ENCODE measurements at regions of chr21 and their contacts with region 1.

Region 1: GRCh38 chr21:42009831-42010523 is at the start of gene ZBTB21:
- DNase-seq: peak; percentile 98
- H3K4me3 ChIP-seq: peak within 1 kb of the TSS; percentile 79
- H3K27ac ChIP-seq: peak within 1 kb of the TSS; percentile 65
- H3K4me1 ChIP-seq: peaks cover 38% of the 10 kb centered on the region
- CTCF ChIP-seq: no peak
- total RNA-seq, gene ZBTB21: 10.0 and 12.4 TPM in 2 replicates

Region 2: GRCh38 chr21:41816220-41817165 is 193.5 kb before region 1 on chr21:
- CTCF ChIA-PET with region 1: no interaction called
- POLR2A ChIA-PET with region 1: interaction called, 3 read pairs
- intact Hi-C with region 1: loop called (anchors 2 kb)
- DNase-seq: peak; percentile 82
- H3K4me3 ChIP-seq: no peak overlapping the region
- H3K27ac ChIP-seq: peak overlapping the region; percentile 38
- H3K4me1 ChIP-seq: peaks cover 11% of the 10 kb centered on the region
- CTCF ChIP-seq: peak; percentile 86

Region 3: GRCh38 chr21:41926117-41926806 is 83.7 kb before region 1 on chr21:
- CTCF ChIA-PET with region 1: no interaction called
- POLR2A ChIA-PET with region 1: interaction called, 3 read pairs
- intact Hi-C with region 1: loop called (anchors 5 kb)
- DNase-seq: peak; percentile 82
- H3K4me3 ChIP-seq: peak overlapping the region; percentile 70
- H3K27ac ChIP-seq: peak overlapping the region; percentile 83
- H3K4me1 ChIP-seq: peaks cover 95% of the 10 kb centered on the region
- CTCF ChIP-seq: no peak

Region 4: GRCh38 chr21:41953831-41954653 is 55.9 kb before region 1 on chr21 and contains the start of gene C2CD2:
- CTCF ChIA-PET with region 1: no interaction called
- POLR2A ChIA-PET with region 1: no interaction called
- intact Hi-C with region 1: no loop called
- DNase-seq: no peak
- H3K4me3 ChIP-seq: no peak within 1 kb of the TSS
- H3K27ac ChIP-seq: no peak within 1 kb of the TSS
- H3K4me1 ChIP-seq: peaks cover 17% of the 10 kb centered on the region
- CTCF ChIP-seq: no peak
- total RNA-seq, gene C2CD2: 3.4 and 4.5 TPM in 2 replicates

Region 5: GRCh38 chr21:42031816-42032215 is 21.8 kb after region 1 on chr21:
- CTCF ChIA-PET with region 1: no interaction called
- POLR2A ChIA-PET with region 1: interaction called, 4 read pairs
- intact Hi-C with region 1: loop called (anchors 1 kb)
- DNase-seq: peak; percentile 65
- H3K4me3 ChIP-seq: peak overlapping the region; percentile 7
- H3K27ac ChIP-seq: peak overlapping the region; percentile 42
- H3K4me1 ChIP-seq: peaks cover 60% of the 10 kb centered on the region
- CTCF ChIP-seq: no peak

Region 6: DNA sequence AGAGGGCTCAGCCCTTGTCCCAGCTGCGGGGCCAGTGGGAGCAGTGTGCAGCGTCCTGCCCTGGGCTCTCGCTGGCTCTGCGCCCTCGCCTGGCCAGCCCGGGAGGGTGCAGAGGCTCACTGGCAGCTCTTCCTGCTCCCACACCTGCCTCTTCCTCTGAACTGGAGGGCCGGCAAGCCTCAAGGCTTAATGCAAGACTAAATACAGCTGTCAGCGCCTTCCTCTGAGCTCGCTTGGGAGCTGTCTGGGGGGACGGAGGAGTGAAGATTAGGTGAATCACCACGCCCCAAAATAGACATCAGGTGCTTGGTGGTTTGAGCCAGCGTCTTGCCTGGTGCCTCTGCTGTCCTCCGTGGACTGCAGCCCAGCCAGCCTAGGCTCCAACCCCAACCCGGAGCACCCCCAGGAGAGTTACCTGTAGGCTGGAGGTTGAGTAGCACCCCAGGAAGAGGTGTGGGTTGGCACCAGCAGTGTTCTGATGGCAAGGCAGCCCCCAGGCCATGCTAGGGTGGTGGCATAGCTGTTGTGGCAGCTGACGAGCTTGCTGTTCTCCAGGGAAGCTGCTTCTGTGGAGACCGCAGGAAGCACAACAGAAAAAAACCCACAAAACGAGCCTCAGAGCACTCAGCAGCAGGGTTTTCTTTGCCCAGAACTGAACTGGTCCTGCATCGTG is 98.0 kb after region 1 on chr21:
- CTCF ChIA-PET with region 1: interaction called, 11 read pairs
- POLR2A ChIA-PET with region 1: interaction called, 5 read pairs
- intact Hi-C with region 1: loop called (anchors 1 kb)
- DNase-seq: peak; percentile 98
- H3K4me3 ChIP-seq: peak overlapping the region; percentile 55
- H3K27ac ChIP-seq: peak overlapping the region; percentile 89
- H3K4me1 ChIP-seq: peaks cover 38% of the 10 kb centered on the region
- CTCF ChIP-seq: peak; percentile 89

Region 7: DNA sequence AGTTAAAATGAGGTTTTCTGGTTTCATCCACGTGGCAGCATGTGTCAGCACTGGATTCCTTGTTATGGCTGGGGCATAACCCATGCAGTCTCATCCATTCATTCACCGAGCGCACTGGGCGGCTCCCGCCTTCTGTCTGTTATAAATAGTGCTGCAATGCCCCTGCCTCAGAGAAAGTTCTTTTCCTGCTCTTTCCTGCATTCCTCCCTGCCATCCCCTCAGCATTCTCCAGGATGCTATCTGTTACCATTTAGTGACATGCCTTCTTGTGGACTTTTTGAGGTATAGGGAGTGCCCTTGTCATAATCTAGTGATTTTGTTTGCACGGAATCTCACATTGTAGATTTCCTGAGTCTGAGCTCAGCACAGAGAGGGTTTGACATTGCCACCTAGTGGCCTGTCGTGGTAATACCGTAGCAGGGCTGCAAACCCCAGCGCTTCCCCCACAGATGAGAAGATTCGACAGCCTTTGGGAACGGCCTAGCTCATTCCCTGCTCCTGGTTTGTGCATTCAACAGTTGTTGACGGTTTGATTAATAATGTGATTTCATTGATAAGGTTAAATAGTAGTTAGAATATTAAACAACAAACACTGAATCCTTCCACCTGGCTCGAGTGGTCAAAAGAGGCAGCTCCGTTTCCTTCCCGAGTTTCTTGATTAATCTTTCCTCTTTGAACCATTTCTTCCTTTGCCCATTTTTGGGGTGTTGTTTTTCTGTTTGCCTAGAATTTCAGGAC is 107.4 kb after region 1 on chr21:
- CTCF ChIA-PET with region 1: interaction called, 4 read pairs
- POLR2A ChIA-PET with region 1: interaction called, 6 read pairs
- intact Hi-C with region 1: loop called (anchors 1 kb)
- DNase-seq: peak; percentile 84
- H3K4me3 ChIP-seq: peak overlapping the region; percentile 10
- H3K27ac ChIP-seq: peak overlapping the region; percentile 93
- H3K4me1 ChIP-seq: peaks cover 70% of the 10 kb centered on the region
- CTCF ChIP-seq: peak; percentile 99

Region 8: GRCh38 chr21:42233067-42233961 is 223.3 kb after region 1 on chr21:
- CTCF ChIA-PET with region 1: no interaction called
- POLR2A ChIA-PET with region 1: no interaction called
- intact Hi-C with region 1: loop called (anchors 2 kb)
- DNase-seq: peak; percentile 97
- H3K4me3 ChIP-seq: peak overlapping the region; percentile 61
- H3K27ac ChIP-seq: peak overlapping the region; percentile 99
- H3K4me1 ChIP-seq: peaks cover 99% of the 10 kb centered on the region
- CTCF ChIP-seq: peak; percentile 64

Measured in OCI-LY7 (cell line).